H1 (cell line): ENCODE measurements at regions of chr11 and their contacts with region 1.

Region 1: GRCh38 chr11:17207317-17208258 is at the start of gene PIK3C2A:
- DNase-seq: peak; percentile 84 to 98
- H3K4me3 ChIP-seq: peak within 1 kb of the TSS; percentile 70 to 92 (median 82)
- H3K27ac ChIP-seq: peak within 1 kb of the TSS; percentile 97
- H3K4me1 ChIP-seq: no peaks in the 10 kb centered on the region; a peak in 2 of 7 replicates
- H3K27me3 ChIP-seq: no peaks in the 10 kb centered on the region
- CTCF ChIP-seq: no peak
- EP300 ChIP-seq: no peak
- POLR2A ChIP-seq: peak; percentile 98
- RAD21 ChIP-seq: no peak
- total RNA-seq, gene PIK3C2A: 117 and 127 TPM in 2 replicates

Region 2: DNA sequence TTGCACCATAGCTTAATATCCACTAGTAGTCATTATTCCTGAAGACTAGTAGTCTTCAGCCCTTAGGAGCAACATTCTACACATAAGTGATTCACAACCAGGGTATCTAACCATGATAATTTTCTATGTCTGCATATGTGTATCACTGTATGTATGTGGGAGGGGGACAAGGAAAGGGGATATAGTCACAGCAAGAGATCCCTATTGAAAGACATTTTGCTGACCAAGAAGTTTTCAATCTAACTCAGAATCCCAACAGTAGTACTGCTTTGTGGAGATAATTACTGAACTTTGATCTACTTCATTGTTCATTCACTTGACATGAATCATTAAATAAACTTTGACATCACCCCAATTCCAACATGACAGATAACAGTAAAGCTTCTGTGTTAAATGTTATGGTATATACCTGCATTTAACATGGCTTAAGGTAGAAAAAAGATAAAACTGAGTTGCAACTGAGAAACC is 10.1 kb before region 1 on chr11:
- CTCF ChIA-PET with region 1: interaction called, 7 read pairs
- POLR2A ChIA-PET with region 1: interaction called, 14 read pairs
- DNase-seq: no peak
- H3K4me3 ChIP-seq: no peak overlapping the region
- H3K27ac ChIP-seq: no peak overlapping the region
- H3K4me1 ChIP-seq: 0 out of 7 replicates have a peak, but pooled peaks cover 0 to 2% (median 0%) of the 10 kb centered on the region in 4 experiments
- H3K27me3 ChIP-seq: no peaks in the 10 kb centered on the region
- CTCF ChIP-seq: no peak
- EP300 ChIP-seq: no peak
- POLR2A ChIP-seq: no peak
- RAD21 ChIP-seq: no peak

Region 3: DNA sequence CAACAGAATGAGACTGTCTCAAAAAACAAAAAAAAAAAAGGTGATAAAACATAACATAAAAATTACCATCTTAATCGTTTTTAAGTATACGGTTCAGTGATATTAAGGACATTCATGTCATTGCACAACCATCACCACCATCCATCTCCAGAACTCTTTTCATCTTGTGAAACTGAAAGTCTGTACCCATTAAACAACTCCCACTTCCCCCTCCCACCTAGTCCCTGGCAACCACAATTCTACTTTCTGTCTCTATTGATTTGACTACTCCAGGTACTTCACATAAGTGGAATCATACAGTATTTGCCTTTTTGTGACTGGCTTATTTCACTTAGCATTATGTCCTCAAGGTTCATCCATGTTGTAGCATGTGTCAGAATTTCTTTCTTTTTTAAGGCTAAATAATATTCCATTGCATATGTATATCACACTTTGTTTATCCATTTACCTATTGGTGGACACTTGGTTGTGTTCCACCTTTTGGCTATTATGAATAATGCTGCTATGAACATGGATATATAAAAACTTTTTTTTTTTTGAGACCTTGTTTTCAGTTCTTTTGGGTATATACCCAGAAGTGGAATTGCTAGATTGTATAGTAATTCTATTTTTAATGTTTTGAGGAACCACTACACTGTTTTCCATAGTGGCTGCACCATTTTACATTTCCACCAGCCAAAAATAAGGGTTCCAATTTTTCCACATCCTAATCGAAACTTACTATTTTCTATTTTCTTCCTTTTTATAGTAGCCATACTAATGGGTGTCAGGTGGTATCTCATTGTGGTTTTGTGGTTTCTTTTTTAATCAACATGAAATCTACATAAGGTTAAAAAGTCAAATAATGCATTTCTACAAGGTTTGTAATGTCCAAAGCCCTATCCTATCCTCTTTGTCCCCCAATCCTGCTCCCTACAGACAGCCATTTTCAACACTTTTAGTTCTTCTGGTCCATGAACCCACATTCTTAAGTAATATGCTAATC is 23.6 kb after region 1 on chr11:
- CTCF ChIA-PET with region 1: interaction called, 10 read pairs
- POLR2A ChIA-PET with region 1: no interaction called
- DNase-seq: no peak
- H3K4me3 ChIP-seq: no peak overlapping the region
- H3K27ac ChIP-seq: no peak overlapping the region
- H3K4me1 ChIP-seq: no peaks in the 10 kb centered on the region
- H3K27me3 ChIP-seq: no peaks in the 10 kb centered on the region
- CTCF ChIP-seq: no peak
- EP300 ChIP-seq: no peak
- POLR2A ChIP-seq: no peak
- RAD21 ChIP-seq: no peak

Region 4: GRCh38 chr11:17366495-17366894 is 158.9 kb after region 1 on chr11:
- CTCF ChIA-PET with region 1: no interaction called
- POLR2A ChIA-PET with region 1: no interaction called
- DNase-seq: no peak
- H3K4me3 ChIP-seq: no peak overlapping the region
- H3K27ac ChIP-seq: no peak overlapping the region
- H3K4me1 ChIP-seq: no peaks in the 10 kb centered on the region
- H3K27me3 ChIP-seq: no peaks in the 10 kb centered on the region; a peak in 1 of 7 replicates
- CTCF ChIP-seq: no peak
- EP300 ChIP-seq: no peak
- POLR2A ChIP-seq: no peak
- RAD21 ChIP-seq: no peak